IMR-90 (cell line): ENCODE measurements at regions of chr7 and their contacts with region 1.

Region 1: GRCh38 chr7:55452971-55453370 is 87.8 kb downstream of the LANCL2 start:
- DNase-seq: no peak
- ATAC-seq: no peak
- H3K4me3 ChIP-seq: no peak overlapping the region
- H3K27ac ChIP-seq: no peak overlapping the region
- H3K4me1 ChIP-seq: no peaks in the 10 kb centered on the region
- H3K27me3 ChIP-seq: no peaks in the 10 kb centered on the region
- CTCF ChIP-seq: no peak
- POLR2A ChIP-seq: no peak
- RAD21 ChIP-seq: no peak

Region 2: GRCh38 chr7:55534175-55534915 is 81.4 kb after region 1 on chr7:
- CTCF ChIA-PET with region 1: no interaction called
- POLR2A ChIA-PET with region 1: interaction called, 13 read pairs
- dilution Hi-C with region 1: no loop called
- in situ Hi-C with region 1: no loop called
- intact Hi-C with region 1: no loop called
- DNase-seq: peak; percentile 81
- ATAC-seq: peak; percentile 62
- H3K4me3 ChIP-seq: no peak overlapping the region
- H3K27ac ChIP-seq: no peak overlapping the region
- H3K4me1 ChIP-seq: peaks cover 33% of the 10 kb centered on the region
- H3K27me3 ChIP-seq: no peaks in the 10 kb centered on the region
- CTCF ChIP-seq: no peak
- POLR2A ChIP-seq: no peak
- RAD21 ChIP-seq: no peak; the same call in 1 of the 2 replicates

Region 3: DNA sequence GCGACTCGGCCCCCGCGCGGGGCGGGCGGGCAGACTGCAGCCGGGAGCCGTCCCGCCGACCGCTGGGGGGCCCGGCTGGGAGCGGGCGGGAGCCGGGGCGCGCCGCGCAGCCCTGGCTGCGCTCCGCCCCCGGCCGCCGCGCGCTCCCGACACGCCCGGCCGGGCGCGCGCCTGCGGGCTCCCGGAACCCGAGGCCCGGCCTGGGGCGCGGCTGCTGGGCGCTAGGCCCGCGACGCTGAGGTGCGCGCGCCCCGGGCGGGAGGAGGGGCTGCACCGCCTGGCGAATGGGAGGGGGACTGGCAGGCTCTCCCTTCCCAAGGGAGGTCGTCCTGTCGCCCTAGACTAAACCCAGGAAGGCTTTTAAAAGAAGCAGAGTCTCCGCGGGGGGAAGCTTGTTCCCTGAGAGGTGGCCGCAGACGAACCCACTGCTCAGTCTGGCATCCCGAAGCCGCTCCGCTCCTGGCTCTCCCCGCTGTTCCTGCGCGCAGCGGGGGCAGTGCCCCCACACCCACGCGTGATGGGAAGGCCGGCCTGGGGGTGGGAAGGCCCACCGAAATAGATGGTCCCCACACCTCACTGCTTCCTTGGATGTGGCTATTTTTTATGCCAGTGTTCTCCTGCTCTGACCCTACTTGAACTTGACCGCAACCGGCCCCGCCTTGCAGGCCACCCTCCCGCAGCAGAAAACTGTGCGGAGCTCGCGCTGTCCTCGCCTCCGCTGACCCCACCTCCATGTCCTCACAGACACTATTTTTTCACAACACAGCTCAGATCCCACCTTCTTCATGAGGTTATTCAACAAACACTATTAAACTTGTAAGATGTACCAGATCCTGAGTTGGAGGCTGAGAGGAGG is 119.6 kb after region 1 on chr7 and contains the start of gene VOPP1:
- CTCF ChIA-PET with region 1: no interaction called
- POLR2A ChIA-PET with region 1: no interaction called
- dilution Hi-C with region 1: no loop called
- in situ Hi-C with region 1: no loop called
- intact Hi-C with region 1: no loop called
- DNase-seq: peak; percentile 63
- ATAC-seq: peak; percentile 74
- H3K4me3 ChIP-seq: peak within 1 kb of the TSS; percentile 67
- H3K27ac ChIP-seq: peak within 1 kb of the TSS; percentile 92
- H3K4me1 ChIP-seq: peaks cover 28% of the 10 kb centered on the region
- H3K27me3 ChIP-seq: no peaks in the 10 kb centered on the region
- CTCF ChIP-seq: no peak
- POLR2A ChIP-seq: no peak
- RAD21 ChIP-seq: no peak
- total RNA-seq, gene VOPP1: 94.5 and 94.7 TPM in 2 replicates